AG04450 (cell line): ENCODE measurements at regions of chr21 and their contacts with region 1.

Region 1: DNA sequence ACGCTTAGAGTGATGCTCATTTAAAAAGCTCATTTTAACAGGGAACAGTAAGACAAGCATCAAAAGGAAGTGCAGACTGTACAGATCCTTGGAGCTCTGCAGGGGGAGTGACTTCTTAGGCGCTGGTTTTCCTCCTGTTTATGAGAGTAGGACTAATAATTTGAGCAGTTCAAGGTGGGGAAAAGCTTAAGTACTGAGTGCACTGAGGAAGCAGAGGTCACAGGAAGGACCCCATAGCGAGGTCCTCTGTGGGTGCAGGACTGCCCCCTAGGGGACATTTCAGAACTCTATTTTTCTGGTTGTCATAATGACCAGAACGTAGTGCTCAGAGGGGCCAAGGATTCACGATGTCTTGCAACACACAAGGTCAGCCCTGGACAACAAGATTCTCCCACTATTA is 112.1 kb downstream of the HLCS start:
- DNase-seq: no peak
- H3K4me3 ChIP-seq: no peak overlapping the region
- H3K27ac ChIP-seq: no peak overlapping the region
- H3K27me3 ChIP-seq: no peaks in the 10 kb centered on the region
- CTCF ChIP-seq: peak; percentile 64

Region 2: DNA sequence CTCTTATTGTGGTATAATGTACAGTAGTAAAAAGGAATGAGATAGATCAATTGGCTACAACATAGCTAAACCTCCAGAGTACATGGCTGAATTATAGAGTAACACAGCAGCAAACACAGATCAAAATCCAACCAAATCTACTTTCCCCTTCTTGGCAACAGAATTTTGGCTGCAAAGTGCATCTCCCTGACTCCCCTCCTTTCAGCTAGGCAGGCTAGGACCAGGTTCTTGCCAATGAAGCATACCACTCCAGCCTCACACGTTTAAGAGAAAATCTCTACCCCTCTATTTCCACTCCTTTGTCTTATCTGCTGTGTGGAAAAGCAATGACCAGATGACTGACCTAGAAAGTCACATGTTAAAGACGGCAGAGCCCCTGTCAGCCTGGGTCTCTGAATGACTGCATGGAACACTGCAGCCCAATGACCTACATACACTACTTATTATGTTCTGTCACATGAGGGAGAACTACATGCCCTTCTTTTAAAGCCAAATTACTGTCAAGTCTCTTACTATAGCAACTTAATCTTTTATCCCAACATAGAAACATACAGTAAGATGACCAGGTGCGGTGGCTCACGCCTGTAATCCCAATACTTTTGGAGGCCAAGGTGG is 13.0 kb after region 1 on chr21:
- CTCF ChIA-PET with region 1: interaction called, 10 read pairs
- POLR2A ChIA-PET with region 1: no interaction called
- DNase-seq: no peak
- H3K4me3 ChIP-seq: no peak overlapping the region
- H3K27ac ChIP-seq: no peak overlapping the region
- H3K27me3 ChIP-seq: no peaks in the 10 kb centered on the region
- CTCF ChIP-seq: no peak